ENCODE measurements at regions of chr18 and their contacts with region 1.

Region 1: DNA sequence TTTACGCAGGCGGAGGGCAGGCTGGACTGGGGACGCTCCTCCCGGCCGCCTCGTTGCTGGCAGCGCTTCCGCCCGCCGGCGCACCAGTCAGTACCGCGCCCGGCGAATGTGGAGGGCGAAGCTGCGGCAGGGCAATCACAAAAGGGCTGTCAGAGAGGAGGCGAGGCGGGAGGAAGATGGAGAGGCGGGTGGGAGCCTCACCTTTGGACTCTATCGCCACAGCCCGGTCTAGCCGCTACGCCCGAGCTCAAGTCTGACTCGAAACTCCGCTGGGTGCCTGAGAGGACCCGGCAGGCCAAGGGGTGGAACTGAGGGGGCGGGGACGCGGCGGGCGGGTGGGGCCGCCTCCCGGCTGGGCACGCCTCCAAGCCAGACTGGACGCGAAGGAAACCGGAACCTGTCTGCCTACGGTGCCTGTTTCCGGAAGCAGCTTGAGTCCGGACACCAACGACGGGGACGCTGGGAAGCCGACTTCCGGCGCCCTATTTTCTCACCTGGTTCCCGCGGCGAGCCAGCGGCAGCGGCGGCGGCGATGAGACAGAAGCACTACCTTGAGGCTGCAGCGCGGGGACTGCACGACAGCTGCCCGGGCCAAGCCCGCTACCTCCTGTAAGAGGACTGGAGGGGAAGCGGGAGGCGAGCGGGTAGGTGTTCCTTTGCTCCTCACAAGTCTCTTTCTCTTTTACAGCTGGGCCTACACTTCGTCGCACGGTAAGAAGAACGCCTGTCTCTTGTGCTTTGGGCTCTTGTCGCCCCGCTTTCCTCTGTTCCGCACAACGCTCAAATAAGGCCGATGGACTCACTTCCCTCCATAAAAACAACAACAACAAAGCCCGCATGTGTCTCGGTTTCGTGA is at the start of gene RMP24:
- DNase-seq: peak; percentile 96
- H3K4me3 ChIP-seq: peak within 1 kb of the TSS; percentile 76 to 91 (median 87)
- H3K27ac ChIP-seq: peak within 1 kb of the TSS; percentile 83 to 97 (median 92)
- H3K4me1 ChIP-seq: peaks cover 12 to 25% (median 19%) of the 10 kb centered on the region in 4 donors
- H3K27me3 ChIP-seq: no peaks in the 10 kb centered on the region
- CTCF ChIP-seq: no peak
- EP300 ChIP-seq: no peak
- POLR2A ChIP-seq: peak; percentile 74

Region 2: GRCh38 chr18:35386600-35387351 is 585.6 kb before region 1 on chr18:
- in situ Hi-C with region 1: loop called in 3 of 4 experiments (anchors 25 kb)
- intact Hi-C with region 1: no loop called
- DNase-seq: peak; percentile 68
- H3K4me3 ChIP-seq: no peak overlapping the region
- H3K27ac ChIP-seq: no peak overlapping the region
- H3K4me1 ChIP-seq: no peaks in the 10 kb centered on the region
- H3K27me3 ChIP-seq: no peaks in the 10 kb centered on the region
- CTCF ChIP-seq: peak; percentile 74 to 92 (median 86)
- EP300 ChIP-seq: no peak
- POLR2A ChIP-seq: no peak